K562 (cell line): ENCODE measurements at regions of chr10 and their contacts with region 1.

Region 1: GRCh38 chr10:22854935-22855421 is 72.9 kb upstream of the ARMC3 start:
- DNase-seq: peak in 2 of 4 experiments; percentile 61 to 65
- ATAC-seq: peak; percentile 93
- H3K4me3 ChIP-seq: no peak overlapping the region
- H3K27ac ChIP-seq: no peak overlapping the region
- H3K4me1 ChIP-seq: peaks cover 0 to 25% of the 10 kb centered on the region in 2 experiments; a peak in 3 of 5 replicates
- H3K27me3 ChIP-seq: no peaks in the 10 kb centered on the region
- CTCF ChIP-seq: peak; percentile 34 to 73 (median 43); a peak in 4 of 6 replicates
- EP300 ChIP-seq: peak; percentile 29
- POLR2A ChIP-seq: no peak
- RAD21 ChIP-seq: peak; percentile 85 to 88

Region 2: DNA sequence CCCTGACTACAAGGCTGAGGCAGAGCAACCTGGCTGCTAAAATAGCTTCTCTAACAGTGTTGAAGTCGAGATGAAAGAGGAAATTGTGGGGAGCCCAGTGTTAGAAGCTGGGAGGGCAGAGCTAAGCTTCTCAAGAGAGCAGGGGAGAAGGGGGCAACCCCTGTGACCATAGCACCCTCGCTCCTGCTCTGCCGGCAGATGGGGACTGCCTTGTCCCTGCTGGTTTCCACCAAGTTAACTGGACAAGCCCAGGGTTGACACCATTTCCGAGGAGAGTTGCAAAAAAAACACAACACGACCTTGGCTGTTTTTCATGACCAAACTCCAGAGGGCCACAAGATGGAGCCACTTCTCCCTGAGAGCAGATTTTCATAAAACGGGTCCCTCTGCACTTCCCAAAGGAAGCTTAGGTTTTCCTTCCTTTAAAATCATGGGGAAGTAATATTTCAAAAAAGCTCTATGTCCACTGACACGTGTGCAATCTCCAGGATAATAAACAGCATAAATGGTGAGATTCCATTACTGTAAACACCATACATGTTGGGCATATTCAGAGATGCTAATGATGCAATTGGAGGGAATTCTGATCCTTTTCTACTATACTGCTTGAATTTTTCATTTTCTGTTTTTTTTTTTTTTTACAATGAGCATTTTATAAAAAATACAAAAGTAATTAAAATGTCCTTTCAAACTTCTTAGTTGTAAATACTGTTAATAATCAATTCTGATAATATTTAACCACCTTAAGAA is 281.0 kb before region 1 on chr10:
- CTCF ChIA-PET with region 1: no interaction called
- POLR2A ChIA-PET with region 1: no interaction called
- in situ Hi-C with region 1: no loop called
- intact Hi-C with region 1: loop called (anchors 5 kb)
- DNase-seq: peak; percentile 23 to 43 (median 28)
- ATAC-seq: peak; percentile 69
- H3K4me3 ChIP-seq: no peak overlapping the region
- H3K27ac ChIP-seq: no peak overlapping the region
- H3K4me1 ChIP-seq: no peaks in the 10 kb centered on the region
- H3K27me3 ChIP-seq: no peaks in the 10 kb centered on the region
- CTCF ChIP-seq: peak; percentile 46 to 62 (median 56)
- EP300 ChIP-seq: no peak
- POLR2A ChIP-seq: no peak
- RAD21 ChIP-seq: peak; percentile 47 to 81

Region 3: GRCh38 chr10:22816298-22816653 is 38.7 kb before region 1 on chr10:
- CTCF ChIA-PET with region 1: no interaction called
- POLR2A ChIA-PET with region 1: no interaction called
- in situ Hi-C with region 1: no loop called
- intact Hi-C with region 1: loop called (anchors 5 kb)
- DNase-seq: peak in 2 of 4 experiments; percentile 31 to 50
- ATAC-seq: peak; percentile 63
- H3K4me3 ChIP-seq: no peak overlapping the region
- H3K27ac ChIP-seq: peak overlapping the region; percentile 74; the same call in 2 of the 3 replicates
- H3K4me1 ChIP-seq: peaks cover 8 to 11% of the 10 kb centered on the region in 2 experiments; a peak in 4 of 5 replicates
- H3K27me3 ChIP-seq: no peaks in the 10 kb centered on the region; a peak in 1 of 5 replicates
- CTCF ChIP-seq: no peak
- EP300 ChIP-seq: peak; percentile 29
- POLR2A ChIP-seq: no peak
- RAD21 ChIP-seq: no peak

Region 4: DNA sequence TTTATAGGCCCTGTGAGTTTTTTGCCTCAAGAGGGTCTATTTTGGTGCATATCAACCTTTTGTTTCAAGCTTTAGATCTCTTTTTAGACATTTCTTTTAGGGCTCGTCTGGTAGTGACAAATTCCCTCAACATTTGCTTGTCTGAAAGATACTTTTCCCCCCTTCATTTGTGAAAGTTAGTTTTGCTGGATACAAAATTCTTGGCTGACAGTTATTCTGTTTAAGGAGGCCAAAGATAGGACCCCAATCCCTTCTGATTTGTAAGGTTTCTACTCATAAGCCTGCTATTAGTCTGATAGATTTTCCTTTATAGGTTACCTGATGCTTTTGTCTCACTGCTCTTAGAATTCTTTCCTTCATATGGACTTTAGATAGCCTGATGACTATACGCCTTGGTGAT is 36.8 kb after region 1 on chr10:
- CTCF ChIA-PET with region 1: no interaction called
- POLR2A ChIA-PET with region 1: no interaction called
- in situ Hi-C with region 1: no loop called
- intact Hi-C with region 1: no loop called
- DNase-seq: no peak
- ATAC-seq: no peak
- H3K4me3 ChIP-seq: no peak overlapping the region
- H3K27ac ChIP-seq: no peak overlapping the region
- H3K4me1 ChIP-seq: peaks cover 11 to 17% of the 10 kb centered on the region in 2 experiments; a peak in 4 of 5 replicates
- H3K27me3 ChIP-seq: no peaks in the 10 kb centered on the region
- CTCF ChIP-seq: no peak
- EP300 ChIP-seq: no peak
- POLR2A ChIP-seq: no peak
- RAD21 ChIP-seq: no peak